ENCODE measurements at regions of chr9 and their contacts with region 1.

Region 1: DNA sequence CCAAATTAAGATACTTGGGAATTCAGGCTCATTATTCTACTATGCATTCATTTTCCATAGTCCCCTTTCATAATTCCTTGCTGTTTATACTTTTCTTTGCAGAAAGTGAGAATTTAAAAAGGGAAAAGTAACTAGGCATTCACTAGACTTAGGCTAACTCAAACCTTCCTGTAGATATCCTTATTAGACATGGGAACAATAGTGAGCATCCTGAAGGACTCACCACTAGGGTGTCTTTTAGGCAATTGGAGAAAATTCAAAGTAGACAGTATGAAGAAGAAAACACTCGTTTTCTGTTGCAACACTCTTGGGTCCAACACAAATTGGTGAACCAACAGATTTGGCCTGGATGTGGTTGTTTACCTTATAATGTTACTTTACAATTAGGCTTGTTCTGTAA is 213.2 kb upstream of the GRIN3A start:
- DNase-seq: no peak
- H3K4me3 ChIP-seq: no peak overlapping the region
- H3K4me3 Mint-ChIP-seq: no peak overlapping the region
- H3K27ac Mint-ChIP-seq: no peak overlapping the region
- H3K4me1 ChIP-seq: no peaks in the 10 kb centered on the region
- H3K4me1 Mint-ChIP-seq: no peaks in the 10 kb centered on the region
- H3K27me3 ChIP-seq: no peaks in the 10 kb centered on the region
- H3K27me3 Mint-ChIP-seq: peaks cover 2% of the 10 kb centered on the region
- CTCF ChIP-seq: no peak

Region 2: GRCh38 chr9:101966691-101967090 is 15.1 kb after region 1 on chr9:
- CTCF ChIA-PET with region 1: no interaction called
- POLR2A ChIA-PET with region 1: no interaction called
- intact Hi-C with region 1: loop called (anchors 1 kb)
- DNase-seq: no peak
- H3K4me3 ChIP-seq: no peak overlapping the region
- H3K4me3 Mint-ChIP-seq: no peak overlapping the region
- H3K27ac Mint-ChIP-seq: no peak overlapping the region
- H3K4me1 ChIP-seq: no peaks in the 10 kb centered on the region
- H3K4me1 Mint-ChIP-seq: no peaks in the 10 kb centered on the region
- H3K27me3 ChIP-seq: no peaks in the 10 kb centered on the region; the same call in 1 of the 2 replicates
- H3K27me3 Mint-ChIP-seq: no peaks in the 10 kb centered on the region
- CTCF ChIP-seq: no peak

Region 3: GRCh38 chr9:102114557-102114956 is 163.0 kb after region 1 on chr9:
- CTCF ChIA-PET with region 1: no interaction called
- POLR2A ChIA-PET with region 1: no interaction called
- intact Hi-C with region 1: no loop called
- DNase-seq: no peak
- H3K4me3 ChIP-seq: no peak overlapping the region
- H3K4me3 Mint-ChIP-seq: no peak overlapping the region
- H3K27ac Mint-ChIP-seq: no peak overlapping the region
- H3K4me1 ChIP-seq: no peaks in the 10 kb centered on the region
- H3K4me1 Mint-ChIP-seq: no peaks in the 10 kb centered on the region
- H3K27me3 ChIP-seq: no peaks in the 10 kb centered on the region
- H3K27me3 Mint-ChIP-seq: no peaks in the 10 kb centered on the region
- CTCF ChIP-seq: no peak